ENCODE measurements at regions of chr20 and their contacts with region 1.

Region 1: GRCh38 chr20:15654208-15654645 is 919.0 kb downstream of the KIF16B start:
- DNase-seq: peak; percentile 48
- CTCF ChIP-seq: peak; percentile 64

Region 2: GRCh38 chr20:14337400-14338171 is 1316.6 kb before region 1 on chr20 and contains the start of gene FLRT3:
- in situ Hi-C with region 1: loop called (anchors 25 kb)
- DNase-seq: peak; percentile 32
- CTCF ChIP-seq: peak; percentile 61

Region 3: DNA sequence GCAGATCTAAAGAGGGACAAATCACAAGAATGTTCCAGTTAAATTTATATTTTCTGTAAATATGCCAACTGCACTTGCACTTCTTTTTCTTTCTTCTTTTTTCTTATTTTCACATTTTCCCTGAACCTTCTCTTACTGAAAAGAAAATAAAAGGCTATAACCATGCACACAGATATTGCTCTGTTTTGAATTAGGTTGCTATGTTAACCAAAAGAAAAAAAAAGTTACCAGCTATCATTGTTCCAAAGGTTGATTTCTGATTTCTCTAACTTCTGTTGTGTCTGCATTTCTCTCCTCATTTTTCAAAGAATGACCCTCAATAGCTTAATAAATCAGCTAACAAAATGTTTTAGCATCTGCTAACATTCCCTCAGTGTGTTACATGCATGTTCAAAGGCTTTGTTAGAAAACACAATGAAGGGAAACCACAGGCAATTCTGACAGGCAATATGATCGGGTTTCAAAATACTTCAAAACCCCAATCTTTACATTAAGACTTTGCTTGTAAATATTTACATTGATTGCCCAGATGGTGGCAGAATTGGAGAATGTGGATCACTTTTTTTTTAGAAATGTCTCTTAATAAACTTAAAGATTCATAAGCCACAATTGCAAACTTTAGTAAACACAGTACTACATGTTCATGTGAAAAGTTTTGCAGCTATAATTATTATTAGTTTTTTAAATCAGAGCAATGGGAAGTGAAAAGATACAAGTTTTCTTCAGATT is 388.5 kb before region 1 on chr20:
- in situ Hi-C with region 1: loop called (anchors 25 kb)
- DNase-seq: no peak
- CTCF ChIP-seq: no peak

Region 4: DNA sequence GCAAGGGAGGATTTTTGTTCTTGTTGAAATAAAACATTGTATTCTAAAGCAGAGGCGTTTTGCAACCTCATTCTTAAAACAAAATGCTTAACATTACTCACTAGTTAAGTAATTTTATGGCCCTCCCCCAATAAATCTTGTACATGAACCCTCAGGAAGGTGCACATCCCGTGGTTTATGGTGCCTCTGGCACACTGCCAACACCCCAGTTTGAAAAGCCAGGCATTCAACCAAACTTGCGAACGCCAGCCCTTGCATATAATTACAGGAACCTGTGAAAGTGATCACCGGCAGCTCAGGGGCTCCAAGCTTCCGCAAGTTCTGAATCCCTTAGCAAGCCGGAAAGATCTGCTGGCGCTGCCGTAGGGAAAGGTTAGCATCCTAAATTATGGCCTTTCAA is 207.9 kb before region 1 on chr20:
- in situ Hi-C with region 1: no loop called
- DNase-seq: no peak
- CTCF ChIP-seq: no peak

Region 5: GRCh38 chr20:15742087-15742486 is 87.9 kb after region 1 on chr20:
- in situ Hi-C with region 1: no loop called
- DNase-seq: no peak
- CTCF ChIP-seq: no peak

Measured in GM13976 (cell line).